ENCODE measurements at regions of chr1 and their contacts with region 1.

Region 1: DNA sequence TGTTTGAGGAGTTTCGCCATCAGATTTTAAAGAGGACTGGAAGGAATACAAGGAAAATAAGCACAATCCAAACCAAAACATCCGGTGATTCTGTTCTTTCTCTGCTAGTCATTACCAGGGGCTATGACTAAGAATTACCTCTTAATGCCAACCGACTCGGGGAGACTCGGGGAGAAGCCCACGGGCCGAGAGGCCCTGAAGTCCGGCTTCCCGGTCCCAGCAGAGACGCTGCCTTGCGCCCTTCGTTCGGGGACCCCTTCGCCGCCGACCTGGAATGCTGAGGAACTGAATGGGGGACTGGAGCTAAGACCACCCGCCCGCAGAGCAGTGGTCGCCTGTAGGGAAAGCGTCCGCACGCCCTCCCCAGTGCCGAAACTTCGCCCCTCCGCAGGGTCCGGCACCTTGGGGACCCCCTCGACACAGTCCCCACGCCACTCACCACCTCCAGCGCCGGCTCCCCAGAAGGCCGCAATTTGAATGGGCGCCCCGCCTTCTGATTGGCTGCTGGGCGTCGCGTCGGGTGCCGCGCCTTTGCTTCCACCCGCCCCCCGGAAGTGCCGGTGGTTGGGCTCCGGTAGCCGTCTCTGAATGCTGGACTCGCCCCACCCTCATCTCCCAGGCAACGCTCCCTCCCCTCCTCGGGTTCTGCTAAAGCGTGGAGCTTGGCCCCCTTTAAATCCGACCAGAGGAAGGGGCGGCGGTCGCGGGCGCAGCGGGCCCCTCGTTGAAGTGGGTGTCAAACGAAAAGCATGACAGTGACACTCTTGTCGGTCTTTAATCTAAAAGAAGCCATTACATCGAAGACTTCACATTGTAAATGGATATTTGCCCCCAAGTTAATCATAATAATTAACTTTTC is at the start of gene KIF14:
- DNase-seq: peak; percentile 93
- H3K4me3 Mint-ChIP-seq: peak within 1 kb of the TSS; percentile 95
- H3K27ac Mint-ChIP-seq: peak within 1 kb of the TSS; percentile 95
- H3K4me1 Mint-ChIP-seq: peaks cover 60% of the 10 kb centered on the region
- H3K27me3 Mint-ChIP-seq: no peaks in the 10 kb centered on the region
- total RNA-seq, gene KIF14: 11.5 and 12.5 TPM in 2 replicates

Region 2: GRCh38 chr1:200351826-200352549 is 268.5 kb before region 1 on chr1:
- intact Hi-C with region 1: loop called (anchors 10 kb)
- DNase-seq: no peak
- H3K4me3 Mint-ChIP-seq: peak overlapping the region; percentile 68
- H3K27ac Mint-ChIP-seq: peak overlapping the region; percentile 77
- H3K4me1 Mint-ChIP-seq: peaks cover 51% of the 10 kb centered on the region
- H3K27me3 Mint-ChIP-seq: peaks cover 2% of the 10 kb centered on the region

Region 3: DNA sequence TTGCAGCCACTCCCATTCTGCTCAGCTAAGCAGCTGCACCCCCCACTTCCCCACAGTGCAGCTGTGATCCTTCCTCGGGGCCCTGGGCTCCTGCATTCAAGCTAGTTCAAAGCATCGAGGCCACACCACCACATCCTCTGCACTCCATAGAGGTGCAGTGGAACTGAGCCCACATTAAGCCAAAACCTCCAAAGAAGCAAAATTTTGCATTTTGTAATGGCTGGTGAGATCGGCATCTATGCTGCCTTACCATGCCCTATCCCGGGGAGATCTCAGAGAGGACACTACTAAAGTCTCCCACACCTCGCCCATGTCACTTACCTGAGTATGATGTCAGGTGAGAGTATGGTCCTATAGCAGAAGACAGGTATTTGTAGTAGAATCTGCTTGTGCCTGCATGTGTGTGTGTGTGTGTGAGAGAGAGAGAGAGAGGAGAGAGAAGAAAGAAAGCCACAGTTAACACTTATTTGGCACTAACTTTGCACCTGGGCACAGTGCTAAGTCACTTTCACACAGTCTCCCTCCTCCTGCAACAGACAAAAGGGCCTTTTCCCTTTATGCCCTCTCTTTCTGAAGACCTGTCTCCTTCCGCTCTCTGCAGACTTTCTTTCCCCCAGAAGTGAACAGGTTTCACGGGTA is 89.8 kb before region 1 on chr1:
- intact Hi-C with region 1: no loop called
- DNase-seq: peak; percentile 14
- H3K4me3 Mint-ChIP-seq: no peak overlapping the region
- H3K27ac Mint-ChIP-seq: no peak overlapping the region
- H3K4me1 Mint-ChIP-seq: peaks cover 11% of the 10 kb centered on the region
- H3K27me3 Mint-ChIP-seq: peaks cover 11% of the 10 kb centered on the region

Region 4: GRCh38 chr1:200669314-200670241 is 49.1 kb after region 1 on chr1 and contains the start of gene DDX59:
- intact Hi-C with region 1: loop called (anchors 1 kb)
- DNase-seq: peak; percentile 89
- H3K4me3 Mint-ChIP-seq: peak within 1 kb of the TSS; percentile 99
- H3K27ac Mint-ChIP-seq: peak within 1 kb of the TSS; percentile 99
- H3K4me1 Mint-ChIP-seq: peaks cover 49% of the 10 kb centered on the region
- H3K27me3 Mint-ChIP-seq: peaks cover 3% of the 10 kb centered on the region
- total RNA-seq, gene DDX59: 13.8 and 14.4 TPM in 2 replicates

Region 5: GRCh38 chr1:200971955-200972711 is 351.6 kb after region 1 on chr1:
- intact Hi-C with region 1: loop called (anchors 5 kb)
- DNase-seq: peak; percentile 26
- H3K4me3 Mint-ChIP-seq: no peak overlapping the region
- H3K27ac Mint-ChIP-seq: no peak overlapping the region
- H3K4me1 Mint-ChIP-seq: peaks cover 4% of the 10 kb centered on the region
- H3K27me3 Mint-ChIP-seq: no peaks in the 10 kb centered on the region

Region 6: DNA sequence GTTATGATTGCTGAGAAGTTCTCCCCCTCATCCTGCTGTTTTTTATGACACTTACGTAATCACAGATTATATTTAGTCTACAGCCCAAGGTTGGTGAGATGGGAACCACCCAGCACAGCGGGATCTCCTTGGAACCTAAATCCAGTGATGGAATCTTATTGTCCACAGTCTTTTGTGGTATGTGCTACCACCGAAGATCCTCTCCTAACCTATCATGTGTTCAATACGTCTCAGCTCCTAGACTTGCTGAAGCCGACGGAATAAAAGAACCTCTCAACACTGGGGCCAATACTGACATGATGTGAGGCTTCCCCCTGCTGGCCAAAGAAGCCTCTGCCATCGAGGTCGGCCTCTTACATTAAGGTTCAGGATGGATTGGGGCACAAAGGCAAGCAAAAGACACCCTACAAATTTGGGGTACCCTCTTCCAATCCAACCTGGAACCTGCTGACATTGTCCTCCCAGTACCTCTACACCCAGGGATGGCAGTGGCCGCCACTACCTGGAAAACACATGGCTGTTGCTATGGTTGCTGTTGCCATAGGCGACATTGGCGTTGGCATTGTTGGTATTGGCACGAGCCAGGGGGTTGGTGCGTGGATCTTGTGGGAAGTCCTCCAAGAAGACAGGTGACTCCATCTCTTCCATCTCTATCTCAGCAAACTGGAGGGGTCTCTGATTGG is 422.4 kb after region 1 on chr1:
- intact Hi-C with region 1: loop called (anchors 5 kb)
- DNase-seq: peak; percentile 53
- H3K4me3 Mint-ChIP-seq: no peak overlapping the region
- H3K27ac Mint-ChIP-seq: no peak overlapping the region
- H3K4me1 Mint-ChIP-seq: peaks cover 5% of the 10 kb centered on the region
- H3K27me3 Mint-ChIP-seq: peaks cover 14% of the 10 kb centered on the region

Region 7: DNA sequence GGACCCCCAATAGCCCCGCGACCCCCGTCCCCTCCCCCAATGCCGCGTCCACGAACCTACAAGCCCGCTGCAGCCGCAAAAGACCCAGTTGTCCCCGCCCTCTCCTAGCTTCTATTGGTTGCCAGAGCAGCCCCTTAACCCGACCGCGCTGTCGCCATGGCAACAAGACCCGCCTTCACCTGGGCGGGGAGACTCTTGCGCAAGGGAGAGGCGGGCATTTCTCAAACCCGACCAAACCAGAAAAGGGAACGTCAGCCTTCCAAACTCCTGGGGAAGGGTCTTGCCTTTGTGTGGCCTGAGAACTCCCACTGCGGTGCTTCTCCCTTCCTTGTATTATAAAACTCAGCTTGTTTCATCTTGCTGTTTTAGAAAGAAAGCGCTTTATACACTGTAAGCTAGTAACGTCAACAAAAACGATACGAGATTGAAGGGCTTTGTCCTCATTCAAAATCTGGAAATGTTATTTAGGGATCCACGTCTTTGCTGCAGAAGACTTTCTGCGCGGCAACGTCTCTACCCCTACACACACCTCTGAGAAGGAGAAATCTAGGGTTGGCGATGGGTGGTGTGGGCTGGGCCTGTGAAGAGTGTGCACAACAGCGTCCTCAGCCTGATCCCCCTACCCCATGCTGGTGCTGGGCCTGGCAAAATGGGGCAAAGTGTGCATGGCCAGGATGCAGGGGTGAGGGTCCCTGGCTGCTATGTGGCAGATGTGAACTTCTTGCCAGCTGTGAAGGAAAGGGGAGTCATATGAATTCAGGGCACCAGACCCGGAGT is 534.1 kb after region 1 on chr1 and contains the start of gene TMEM9:
- intact Hi-C with region 1: loop called (anchors 2 kb)
- DNase-seq: peak; percentile 95
- H3K4me3 Mint-ChIP-seq: peak within 1 kb of the TSS; percentile 85
- H3K27ac Mint-ChIP-seq: peak within 1 kb of the TSS; percentile 88
- H3K4me1 Mint-ChIP-seq: peaks cover 23% of the 10 kb centered on the region
- H3K27me3 Mint-ChIP-seq: peaks cover 18% of the 10 kb centered on the region
- total RNA-seq, gene TMEM9: 13.2 and 13.9 TPM in 2 replicates

Region 8: GRCh38 chr1:201488817-201489589 is 868.5 kb after region 1 on chr1:
- intact Hi-C with region 1: no loop called
- DNase-seq: no peak
- H3K4me3 Mint-ChIP-seq: no peak overlapping the region
- H3K27ac Mint-ChIP-seq: no peak overlapping the region
- H3K4me1 Mint-ChIP-seq: peaks cover 8% of the 10 kb centered on the region
- H3K27me3 Mint-ChIP-seq: no peaks in the 10 kb centered on the region

Measured in activated T-helper 1 cell treated with anti-CD3 and anti-CD28 coated beads, Interleukin-12 subunit alpha, Interleukin-12 subunit beta, Interleukin-2, Interleukin-4 antibody, amounts not matched to agents 30 ng/mL and 10 ng/mL and 1 ng/mL, durations not matched to agents 14 hours and 24 hours and 36 hours (primary cell).